ENCODE measurements at regions of chr4 and their contacts with region 1.

Region 1: DNA sequence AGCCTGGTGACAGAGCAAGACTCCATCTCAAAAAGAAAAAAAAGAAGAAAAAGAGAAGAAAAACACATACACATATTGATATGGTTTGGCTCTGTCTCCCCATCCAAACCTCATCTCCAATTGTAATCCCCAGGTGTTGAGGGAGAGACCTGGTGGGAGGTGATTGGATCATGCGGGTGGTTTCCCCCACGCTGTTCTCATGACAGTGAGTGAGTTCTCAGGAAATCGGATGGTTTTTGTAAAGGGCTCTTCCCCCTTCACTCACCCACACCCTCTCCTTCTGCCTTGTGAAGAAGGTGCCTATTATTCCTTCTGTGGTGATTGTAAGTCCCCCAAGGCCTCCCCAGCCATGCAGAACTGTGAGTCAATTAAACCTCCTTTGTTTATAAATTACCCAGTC is 68.4 kb downstream of the LDB2 start:
- DNase-seq: no peak
- H3K4me3 ChIP-seq: no peak overlapping the region
- CTCF ChIP-seq: no peak

Region 2: GRCh38 chr4:16794816-16795445 is 35.1 kb before region 1 on chr4:
- in situ Hi-C with region 1: loop called (anchors 5 kb)
- DNase-seq: no peak
- H3K4me3 ChIP-seq: no peak overlapping the region
- CTCF ChIP-seq: peak; percentile 90

Measured in astrocyte of the cerebellum (primary cell).